OCI-LY7 (cell line): ENCODE measurements at regions of chr21 and their contacts with region 1.

Region 1: GRCh38 chr21:42636538-42636930 is 16.9 kb upstream of the PDE9A start:
- DNase-seq: no peak
- H3K4me3 ChIP-seq: no peak overlapping the region
- H3K27ac ChIP-seq: no peak overlapping the region
- H3K4me1 ChIP-seq: no peaks in the 10 kb centered on the region
- CTCF ChIP-seq: no peak

Region 2: GRCh38 chr21:42574234-42575027 is 62.1 kb before region 1 on chr21:
- CTCF ChIA-PET with region 1: no interaction called
- POLR2A ChIA-PET with region 1: no interaction called
- intact Hi-C with region 1: loop called (anchors 10 kb)
- DNase-seq: no peak
- H3K4me3 ChIP-seq: no peak overlapping the region
- H3K27ac ChIP-seq: no peak overlapping the region
- H3K4me1 ChIP-seq: no peaks in the 10 kb centered on the region
- CTCF ChIP-seq: peak; percentile 55; the same call in 1 of the 2 replicates

Region 3: DNA sequence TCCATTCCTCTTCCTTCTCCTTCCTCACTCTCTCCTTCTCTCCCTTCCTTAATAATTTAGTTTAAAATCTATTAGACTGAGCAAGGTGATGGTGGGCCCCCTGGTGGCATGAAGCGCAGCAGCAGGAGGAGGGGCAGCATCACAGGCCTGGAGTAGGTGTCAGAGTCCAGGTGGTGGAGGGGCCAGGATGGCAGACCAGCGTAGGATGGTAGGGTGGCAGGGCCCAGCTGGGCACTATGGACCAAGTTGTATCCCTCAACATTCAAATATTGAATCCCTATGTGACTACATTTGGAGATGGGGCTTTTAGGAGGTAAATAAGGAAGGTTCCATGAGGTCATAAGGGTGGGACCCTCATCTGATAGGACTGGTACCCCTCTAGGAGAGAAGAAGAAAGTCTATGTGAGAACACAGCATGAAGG is 181.8 kb after region 1 on chr21:
- CTCF ChIA-PET with region 1: no interaction called
- POLR2A ChIA-PET with region 1: no interaction called
- intact Hi-C with region 1: loop called (anchors 10 kb)
- DNase-seq: peak; percentile 41
- H3K4me3 ChIP-seq: no peak overlapping the region
- H3K27ac ChIP-seq: no peak overlapping the region
- H3K4me1 ChIP-seq: no peaks in the 10 kb centered on the region
- CTCF ChIP-seq: peak; percentile 89